ENCODE measurements at regions of chr11 and their contacts with region 1.

Region 1: GRCh38 chr11:128290106-128290840 is 297.1 kb downstream of the ETS1 start:
- ATAC-seq: peak; percentile 80 to 96 (median 87)
- H3K4me3 ChIP-seq: no peak overlapping the region
- H3K27ac ChIP-seq: no peak overlapping the region
- H3K4me1 ChIP-seq: peaks cover 11 to 14% of the 10 kb centered on the region in 2 donors

Region 2: GRCh38 chr11:128039140-128040021 is 250.9 kb before region 1 on chr11:
- in situ Hi-C with region 1: loop called in 1 of 9 experiments (anchors 25 kb)
- ATAC-seq: peak in 3 of 8 experiments; percentile 49 to 100 (median 100)
- H3K4me3 ChIP-seq: no peak overlapping the region
- H3K27ac ChIP-seq: no peak overlapping the region
- H3K4me1 ChIP-seq: peaks cover 4 to 5% of the 10 kb centered on the region in 2 donors

Region 3: GRCh38 chr11:128195057-128195751 is 95.1 kb before region 1 on chr11:
- in situ Hi-C with region 1: loop called in 1 of 9 experiments (anchors 25 kb)
- ATAC-seq: peak in 1 of 8 experiments; percentile 66
- H3K4me3 ChIP-seq: no peak overlapping the region
- H3K27ac ChIP-seq: no peak overlapping the region
- H3K4me1 ChIP-seq: no peaks in the 10 kb centered on the region

Region 4: GRCh38 chr11:128472128-128473089 is 182.1 kb after region 1 on chr11:
- in situ Hi-C with region 1: loop called in 1 of 9 experiments (anchors 25 kb)
- ATAC-seq: no peak
- H3K4me3 ChIP-seq: no peak overlapping the region
- H3K27ac ChIP-seq: no peak overlapping the region
- H3K4me1 ChIP-seq: peaks cover 0 to 5% of the 10 kb centered on the region in 2 donors